ENCODE measurements at regions of chr11 and their contacts with region 1.

Region 1: DNA sequence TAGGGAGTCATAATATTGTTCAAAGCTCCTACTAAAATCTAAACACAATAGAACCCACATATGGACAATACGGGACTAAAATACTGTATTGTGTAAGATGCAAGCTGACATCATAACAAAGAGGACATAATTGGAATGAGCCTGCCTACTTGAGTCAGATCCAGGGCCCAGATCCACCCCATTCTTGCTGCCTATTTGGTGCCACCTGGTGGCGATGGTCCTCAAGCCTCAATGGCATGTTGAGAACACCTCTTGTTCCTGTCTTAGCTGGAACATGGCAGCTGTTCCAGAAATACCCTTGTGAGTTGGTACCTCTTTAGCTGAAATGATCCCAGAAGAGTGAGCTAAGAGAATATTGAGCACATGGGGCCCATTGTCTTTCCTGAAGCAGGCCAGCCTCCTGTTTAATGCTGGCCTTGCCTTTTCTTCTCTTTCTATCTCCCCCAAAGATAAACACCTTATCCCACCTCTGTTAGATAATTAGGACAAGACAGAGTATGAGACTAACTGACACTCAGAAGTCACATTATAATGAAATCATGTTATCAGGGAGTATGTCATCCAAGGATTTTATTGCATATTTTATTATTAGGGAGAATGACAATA is 680.9 kb upstream of the ANO5 start:
- DNase-seq: peak; percentile 28
- H3K4me3 ChIP-seq: no peak overlapping the region
- H3K27ac ChIP-seq: no peak overlapping the region
- H3K4me1 ChIP-seq: no peaks in the 10 kb centered on the region
- H3K27me3 ChIP-seq: no peaks in the 10 kb centered on the region
- CTCF ChIP-seq: peak in 3 of 5 experiments; percentile 11 to 38 (median 30)
- EP300 ChIP-seq: no peak
- POLR2A ChIP-seq: no peak

Region 2: GRCh38 chr11:20671856-20672546 is 839.9 kb before region 1 on chr11:
- in situ Hi-C with region 1: loop called in 1 of 4 experiments (anchors 25 kb)
- intact Hi-C with region 1: no loop called
- DNase-seq: no peak
- H3K4me3 ChIP-seq: no peak overlapping the region
- H3K27ac ChIP-seq: no peak overlapping the region
- H3K4me1 ChIP-seq: peaks cover 0 to 8% (median 6%) of the 10 kb centered on the region in 4 donors
- H3K27me3 ChIP-seq: peaks cover 66% of the 10 kb centered on the region
- CTCF ChIP-seq: no peak
- EP300 ChIP-seq: no peak
- POLR2A ChIP-seq: no peak

Region 3: DNA sequence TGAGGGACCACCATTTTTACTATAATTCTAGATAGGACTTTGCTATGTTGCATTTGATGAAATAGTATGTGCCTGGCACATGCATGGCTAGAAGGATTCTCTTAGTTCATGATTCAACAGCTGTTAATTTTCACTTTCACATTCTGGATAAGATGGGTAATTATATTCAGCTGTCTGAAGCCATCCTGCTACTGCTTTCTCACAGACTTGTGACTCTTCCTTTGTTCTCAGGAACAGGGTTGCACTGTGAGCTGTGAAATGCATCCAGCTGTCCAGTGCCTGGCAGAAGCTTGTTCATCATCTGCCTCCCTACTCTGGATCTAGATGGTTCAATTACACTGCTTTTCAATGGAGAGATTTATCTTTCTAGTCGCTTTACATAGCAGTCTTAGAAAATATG is 70.9 kb after region 1 on chr11:
- in situ Hi-C with region 1: no loop called
- intact Hi-C with region 1: no loop called
- DNase-seq: no peak
- H3K4me3 ChIP-seq: no peak overlapping the region
- H3K27ac ChIP-seq: no peak overlapping the region
- H3K4me1 ChIP-seq: no peaks in the 10 kb centered on the region
- H3K27me3 ChIP-seq: no peaks in the 10 kb centered on the region
- CTCF ChIP-seq: no peak
- EP300 ChIP-seq: no peak
- POLR2A ChIP-seq: no peak

Region 4: GRCh38 chr11:21640491-21640890 is 128.6 kb after region 1 on chr11:
- in situ Hi-C with region 1: no loop called
- intact Hi-C with region 1: no loop called
- DNase-seq: no peak
- H3K4me3 ChIP-seq: no peak overlapping the region
- H3K27ac ChIP-seq: no peak overlapping the region
- H3K4me1 ChIP-seq: no peaks in the 10 kb centered on the region
- H3K27me3 ChIP-seq: no peaks in the 10 kb centered on the region
- CTCF ChIP-seq: no peak
- EP300 ChIP-seq: no peak
- POLR2A ChIP-seq: no peak